ENCODE measurements at regions of chr5 and their contacts with region 1.

Region 1: DNA sequence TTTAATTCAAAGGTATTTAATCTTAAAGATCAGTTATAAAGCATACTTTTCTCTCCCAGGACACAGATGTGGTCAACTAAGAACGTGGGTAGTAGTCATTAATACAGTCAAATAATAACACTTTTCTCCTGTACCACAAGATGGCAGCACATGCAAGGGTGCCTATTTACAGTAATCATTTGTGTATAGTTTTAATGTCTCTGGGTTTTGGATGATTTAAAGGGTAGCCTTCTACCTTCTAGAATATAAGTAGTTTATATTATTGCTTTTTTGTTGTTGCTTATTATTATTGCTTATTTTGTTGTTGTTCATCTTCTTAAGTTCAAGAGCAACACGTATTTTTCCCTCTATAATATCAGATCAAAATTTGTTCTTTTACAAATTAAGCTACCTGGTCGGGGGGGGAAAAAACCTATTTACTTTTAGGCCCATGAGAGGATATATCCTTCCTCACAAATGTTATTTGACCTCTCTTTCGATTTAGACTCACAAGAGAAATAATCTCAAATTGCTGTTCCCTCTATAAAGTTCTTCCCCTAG is 59.6 kb upstream of the SLC27A6 start:
- DNase-seq: peak; percentile 49
- H3K4me3 Mint-ChIP-seq: no peak overlapping the region
- H3K27ac Mint-ChIP-seq: no peak overlapping the region
- H3K4me1 Mint-ChIP-seq: no peaks in the 10 kb centered on the region
- H3K27me3 Mint-ChIP-seq: peaks cover under 1% of the 10 kb centered on the region

Region 2: GRCh38 chr5:128213340-128213739 is 692.3 kb before region 1 on chr5:
- CTCF ChIA-PET with region 1: no interaction called
- intact Hi-C with region 1: loop called (anchors 2 kb)
- DNase-seq: peak; percentile 73
- H3K4me3 Mint-ChIP-seq: no peak overlapping the region
- H3K27ac Mint-ChIP-seq: no peak overlapping the region
- H3K4me1 Mint-ChIP-seq: peaks cover 2% of the 10 kb centered on the region
- H3K27me3 Mint-ChIP-seq: no peaks in the 10 kb centered on the region

Region 3: DNA sequence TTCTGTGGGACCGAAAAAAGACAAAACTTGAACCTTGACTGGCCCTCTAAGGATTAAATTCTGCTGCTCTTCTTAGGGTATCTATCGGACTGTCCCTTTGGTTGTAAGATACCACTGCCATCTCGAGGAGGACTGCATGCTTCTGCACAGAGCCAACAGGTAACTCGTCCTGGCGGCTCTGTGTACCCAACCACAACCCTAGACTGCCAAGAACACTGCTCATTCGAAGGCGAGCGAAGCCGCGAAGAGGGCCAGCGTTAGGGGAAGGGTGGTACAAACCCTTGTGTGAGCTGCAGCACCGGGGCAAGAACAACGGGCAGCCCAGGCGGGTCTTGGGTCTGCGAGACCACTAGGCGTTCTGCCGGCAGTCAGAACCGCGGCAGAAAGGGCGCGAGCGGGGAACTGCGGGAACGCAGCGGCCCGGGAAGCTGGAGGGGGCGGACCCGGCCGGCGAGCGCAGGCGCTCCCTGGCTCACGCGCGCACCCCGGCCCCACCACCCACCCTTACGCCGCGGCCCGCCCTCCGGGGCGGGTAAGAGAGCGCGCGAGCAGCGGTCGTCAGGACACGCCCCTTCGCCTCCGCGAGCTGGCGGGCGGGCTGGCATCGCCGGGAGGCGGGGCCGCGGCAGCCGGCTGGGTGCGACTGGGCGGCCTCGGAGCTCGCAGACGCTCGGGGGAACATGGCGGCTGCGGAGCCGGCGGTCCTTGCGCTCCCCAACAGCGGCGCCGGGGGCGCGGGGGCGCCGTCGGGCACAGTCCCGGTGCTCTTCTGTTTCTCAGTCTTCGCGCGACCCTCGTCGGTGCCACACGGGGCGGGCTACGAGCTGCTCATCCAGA is 188.7 kb after region 1 on chr5 and contains the start of gene ISOC1:
- CTCF ChIA-PET with region 1: no interaction called
- intact Hi-C with region 1: loop called (anchors 1 kb)
- DNase-seq: peak; percentile 91
- H3K4me3 Mint-ChIP-seq: peak within 1 kb of the TSS; percentile 83
- H3K27ac Mint-ChIP-seq: peak within 1 kb of the TSS; percentile 37
- H3K4me1 Mint-ChIP-seq: peaks cover 32% of the 10 kb centered on the region
- H3K27me3 Mint-ChIP-seq: peaks cover 6% of the 10 kb centered on the region
- total RNA-seq, gene ISOC1: 25.9 to 27.4 TPM

Region 4: DNA sequence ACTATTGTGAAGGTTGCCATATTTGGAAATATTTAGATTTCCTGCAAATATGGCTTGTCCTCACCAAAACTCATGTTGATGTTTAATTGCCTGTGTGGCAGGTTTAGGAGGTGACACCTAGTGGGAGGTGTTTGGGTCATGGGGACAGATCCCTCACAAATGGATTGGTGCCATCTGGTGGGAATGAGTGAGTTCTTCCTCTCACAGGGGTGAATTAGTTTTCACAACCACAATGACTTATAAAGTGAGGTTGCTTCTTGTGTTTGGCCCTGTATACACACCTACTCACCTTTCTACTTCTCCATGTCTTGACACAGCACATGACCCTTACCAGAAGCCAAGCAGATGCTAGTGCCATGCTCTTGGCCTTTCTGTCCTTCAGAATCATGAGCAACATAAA is 230.0 kb after region 1 on chr5:
- CTCF ChIA-PET with region 1: no interaction called
- intact Hi-C with region 1: loop called (anchors 2 kb)
- DNase-seq: peak; percentile 35
- H3K4me3 Mint-ChIP-seq: no peak overlapping the region
- H3K27ac Mint-ChIP-seq: no peak overlapping the region
- H3K4me1 Mint-ChIP-seq: no peaks in the 10 kb centered on the region
- H3K27me3 Mint-ChIP-seq: no peaks in the 10 kb centered on the region

Region 5: DNA sequence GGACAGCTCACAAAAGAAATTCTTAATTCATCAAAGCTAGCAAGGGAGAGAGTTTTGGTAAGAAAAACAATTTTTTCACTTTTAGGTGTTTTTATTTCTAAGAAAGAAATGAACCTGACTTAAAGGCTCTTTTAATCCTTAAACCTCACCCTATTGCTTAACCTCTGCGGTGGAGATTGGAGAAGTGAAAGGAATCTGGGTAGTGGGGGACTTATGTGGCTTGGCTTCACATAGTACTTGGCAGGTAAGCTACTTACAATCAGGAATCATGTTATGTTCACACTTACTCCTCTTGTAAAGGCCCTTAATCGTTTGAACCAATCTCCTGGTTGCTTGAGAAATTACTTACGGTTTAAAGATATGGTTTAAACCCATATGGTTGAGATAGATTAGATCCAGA is 293.7 kb after region 1 on chr5:
- CTCF ChIA-PET with region 1: no interaction called
- intact Hi-C with region 1: no loop called
- DNase-seq: no peak
- H3K4me3 Mint-ChIP-seq: no peak overlapping the region
- H3K27ac Mint-ChIP-seq: no peak overlapping the region
- H3K4me1 Mint-ChIP-seq: no peaks in the 10 kb centered on the region
- H3K27me3 Mint-ChIP-seq: no peaks in the 10 kb centered on the region

Region 6: GRCh38 chr5:129382921-129383672 is 477.5 kb after region 1 on chr5:
- CTCF ChIA-PET with region 1: interaction called, 4 read pairs
- intact Hi-C with region 1: loop called (anchors 10 kb)
- DNase-seq: no peak
- H3K4me3 Mint-ChIP-seq: no peak overlapping the region
- H3K27ac Mint-ChIP-seq: no peak overlapping the region
- H3K4me1 Mint-ChIP-seq: no peaks in the 10 kb centered on the region
- H3K27me3 Mint-ChIP-seq: no peaks in the 10 kb centered on the region

Measured in activated naive CD4-positive, alpha-beta T cell treated with anti-CD3 and anti-CD28 coated beads for 36 hours (primary cell).